CD14-positive monocyte (primary cell): ENCODE measurements at regions of chr15 and their contacts with region 1.

Region 1: DNA sequence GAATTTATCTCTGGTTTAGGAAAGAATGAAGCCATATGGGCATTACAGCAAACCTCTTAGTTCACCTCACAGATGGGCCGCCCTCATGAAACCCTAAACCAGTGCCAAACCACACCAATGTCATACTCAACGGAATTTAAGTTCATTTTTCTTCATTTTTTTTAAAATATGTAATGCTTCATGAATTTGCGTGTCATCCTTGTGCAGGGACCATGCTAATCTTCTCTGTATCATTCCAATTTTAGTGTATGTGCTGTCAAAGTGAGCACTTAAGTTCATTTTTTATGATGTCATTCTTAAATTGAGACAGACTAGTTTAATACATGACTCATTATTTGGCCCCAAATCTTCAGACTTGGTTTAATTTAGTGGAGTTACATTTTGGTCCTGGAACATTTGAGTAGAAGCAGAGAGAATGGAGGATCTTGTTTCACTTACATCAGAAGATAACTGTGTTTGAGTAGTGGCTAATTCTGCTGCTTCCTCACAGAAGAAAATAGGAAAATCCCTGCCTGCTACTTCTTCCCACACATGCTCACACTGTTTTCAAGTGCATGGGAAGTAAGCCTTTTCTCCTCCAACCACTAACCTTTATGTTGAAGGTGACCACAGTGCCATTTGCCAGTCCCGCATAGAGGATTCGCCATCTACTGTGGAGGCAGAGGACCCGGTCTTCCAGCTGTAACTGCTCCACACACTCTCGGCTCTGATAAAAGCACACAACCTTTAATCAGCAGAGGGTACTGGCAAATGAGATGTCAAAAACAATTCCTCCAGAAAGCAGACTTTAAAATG is 63.3 kb downstream of the ZNF106 start:
- DNase-seq: no peak
- H3K4me3 ChIP-seq: no peak overlapping the region
- H3K4me3 Mint-ChIP-seq: no peak overlapping the region
- H3K27ac ChIP-seq: no peak overlapping the region
- H3K27ac Mint-ChIP-seq: no peak overlapping the region
- H3K4me1 ChIP-seq: no peaks in the 10 kb centered on the region
- H3K4me1 Mint-ChIP-seq: no peaks in the 10 kb centered on the region
- H3K27me3 ChIP-seq: no peaks in the 10 kb centered on the region
- H3K27me3 Mint-ChIP-seq: peaks cover 0 to 2% (median 0%) of the 10 kb centered on the region in 3 donors
- CTCF ChIP-seq: no peak

Region 2: GRCh38 chr15:41051139-41051538 is 1376.5 kb before region 1 on chr15:
- intact Hi-C with region 1: loop called in 1 of 2 experiments (anchors 10 kb)
- DNase-seq: no peak
- H3K4me3 ChIP-seq: no peak overlapping the region
- H3K4me3 Mint-ChIP-seq: no peak overlapping the region
- H3K27ac ChIP-seq: no peak overlapping the region
- H3K27ac Mint-ChIP-seq: peak overlapping the region in 2 of 7 donors; percentile 23 to 36
- H3K4me1 ChIP-seq: no peaks in the 10 kb centered on the region
- H3K4me1 Mint-ChIP-seq: no peaks in the 10 kb centered on the region
- H3K27me3 ChIP-seq: no peaks in the 10 kb centered on the region
- H3K27me3 Mint-ChIP-seq: no peaks in the 10 kb centered on the region
- CTCF ChIP-seq: no peak

Region 3: DNA sequence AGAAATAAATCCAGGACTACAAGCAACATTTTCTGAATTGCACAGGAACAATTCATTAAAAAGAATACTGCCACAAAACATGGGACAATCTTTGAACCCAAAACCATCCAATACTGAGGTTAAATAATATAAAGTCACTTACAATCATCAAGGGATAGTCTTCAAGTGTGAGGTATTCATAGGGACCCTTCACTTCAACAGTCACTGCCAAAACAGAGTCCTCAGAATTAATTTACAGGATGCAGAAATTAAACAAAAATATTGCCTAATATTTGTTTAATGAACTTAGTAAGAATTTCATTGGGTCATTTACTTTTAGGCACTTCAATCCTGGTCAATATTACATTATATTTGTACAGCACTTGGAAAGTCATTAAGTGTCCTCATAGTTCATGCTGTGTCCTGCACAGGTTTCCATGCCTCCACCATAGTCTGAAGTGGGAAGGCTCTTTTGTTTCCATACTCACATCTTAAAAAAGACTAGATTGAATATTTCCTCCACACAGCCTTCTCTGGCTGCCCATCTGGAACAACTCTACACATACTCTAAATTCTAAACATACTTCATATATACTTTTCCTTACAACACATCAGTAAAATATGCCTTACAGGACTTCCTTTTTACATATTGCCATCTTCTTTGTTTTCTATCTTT is 188.0 kb before region 1 on chr15:
- intact Hi-C with region 1: loop called in 1 of 2 experiments (anchors 10 kb)
- DNase-seq: no peak
- H3K4me3 ChIP-seq: no peak overlapping the region
- H3K4me3 Mint-ChIP-seq: no peak overlapping the region
- H3K27ac ChIP-seq: no peak overlapping the region
- H3K27ac Mint-ChIP-seq: peak overlapping the region in 1 of 7 donors; percentile 2
- H3K4me1 ChIP-seq: no peaks in the 10 kb centered on the region
- H3K4me1 Mint-ChIP-seq: no peaks in the 10 kb centered on the region
- H3K27me3 ChIP-seq: no peaks in the 10 kb centered on the region
- H3K27me3 Mint-ChIP-seq: no peaks in the 10 kb centered on the region
- CTCF ChIP-seq: no peak

Region 4: GRCh38 chr15:42465520-42466259 is 38.1 kb after region 1 on chr15:
- intact Hi-C with region 1: no loop called
- DNase-seq: no peak
- H3K4me3 ChIP-seq: no peak overlapping the region
- H3K4me3 Mint-ChIP-seq: no peak overlapping the region
- H3K27ac ChIP-seq: no peak overlapping the region
- H3K27ac Mint-ChIP-seq: no peak overlapping the region
- H3K4me1 ChIP-seq: no peaks in the 10 kb centered on the region
- H3K4me1 Mint-ChIP-seq: no peaks in the 10 kb centered on the region
- H3K27me3 ChIP-seq: no peaks in the 10 kb centered on the region
- H3K27me3 Mint-ChIP-seq: no peaks in the 10 kb centered on the region
- CTCF ChIP-seq: no peak